ENCODE measurements at regions of chr18 and their contacts with region 1.

Region 1: GRCh38 chr18:3447895-3448837 is 1.8 kb upstream of the TGIF1 start:
- DNase-seq: peak; percentile 98
- H3K4me3 ChIP-seq: peak overlapping the region; percentile 69 to 96 (median 90)
- H3K27ac ChIP-seq: peak overlapping the region; percentile 98 to 100 (median 98)
- H3K4me1 ChIP-seq: peaks cover 14 to 23% (median 19%) of the 10 kb centered on the region in 4 donors
- H3K27me3 ChIP-seq: no peaks in the 10 kb centered on the region
- CTCF ChIP-seq: no peak
- EP300 ChIP-seq: peak; percentile 26
- POLR2A ChIP-seq: peak; percentile 92

Region 2: GRCh38 chr18:2655178-2655953 is 792.8 kb before region 1 on chr18 and contains the start of gene SMCHD1:
- intact Hi-C with region 1: loop called (anchors 10 kb)
- DNase-seq: peak; percentile 96
- H3K4me3 ChIP-seq: peak within 1 kb of the TSS; percentile 91 to 98 (median 94)
- H3K27ac ChIP-seq: peak within 1 kb of the TSS; percentile 97 to 99 (median 98)
- H3K4me1 ChIP-seq: peaks cover 23 to 45% (median 43%) of the 10 kb centered on the region in 4 donors
- H3K27me3 ChIP-seq: no peaks in the 10 kb centered on the region
- CTCF ChIP-seq: no peak
- EP300 ChIP-seq: no peak
- POLR2A ChIP-seq: peak; percentile 38
- total RNA-seq, gene SMCHD1: 47.9 to 62.3 (median 58.2) TPM

Region 3: GRCh38 chr18:3261371-3262246 is 186.6 kb before region 1 on chr18 and contains the start of gene MYL12B:
- intact Hi-C with region 1: loop called (anchors 5 kb)
- DNase-seq: peak; percentile 96
- H3K4me3 ChIP-seq: peak within 1 kb of the TSS; percentile 88 to 98 (median 96)
- H3K27ac ChIP-seq: peak within 1 kb of the TSS; percentile 96
- H3K4me1 ChIP-seq: peaks cover 56 to 78% (median 65%) of the 10 kb centered on the region in 4 donors
- H3K27me3 ChIP-seq: no peaks in the 10 kb centered on the region
- CTCF ChIP-seq: peak in 2 of 3 experiments; percentile 17 to 21
- EP300 ChIP-seq: no peak
- POLR2A ChIP-seq: peak; percentile 79
- total RNA-seq, gene MYL12B: 211 to 279 (median 244) TPM

Region 4: GRCh38 chr18:3340015-3340681 is 108.0 kb before region 1 on chr18:
- intact Hi-C with region 1: loop called (anchors 10 kb)
- DNase-seq: no peak
- H3K4me3 ChIP-seq: no peak overlapping the region
- H3K27ac ChIP-seq: no peak overlapping the region
- H3K4me1 ChIP-seq: peaks cover 0 to 6% (median 4%) of the 10 kb centered on the region in 4 donors
- H3K27me3 ChIP-seq: no peaks in the 10 kb centered on the region
- CTCF ChIP-seq: no peak
- EP300 ChIP-seq: no peak
- POLR2A ChIP-seq: no peak

Region 5: GRCh38 chr18:3593904-3594661 is 145.9 kb after region 1 on chr18:
- intact Hi-C with region 1: loop called (anchors 2 kb)
- DNase-seq: peak; percentile 98
- H3K4me3 ChIP-seq: peak overlapping the region; percentile 53 to 62 (median 56)
- H3K27ac ChIP-seq: peak overlapping the region; percentile 89 to 97 (median 96)
- H3K4me1 ChIP-seq: peaks cover 46 to 53% (median 52%) of the 10 kb centered on the region in 4 donors
- H3K27me3 ChIP-seq: no peaks in the 10 kb centered on the region
- CTCF ChIP-seq: peak; percentile 83 to 90 (median 89)
- EP300 ChIP-seq: peak; percentile 58
- POLR2A ChIP-seq: no peak

Measured in esophagus muscularis mucosa (tissue), 4 donors.